Ovary (tissue), 10 donors: ENCODE measurements at regions of chr6 and their contacts with region 1.

Region 1: DNA sequence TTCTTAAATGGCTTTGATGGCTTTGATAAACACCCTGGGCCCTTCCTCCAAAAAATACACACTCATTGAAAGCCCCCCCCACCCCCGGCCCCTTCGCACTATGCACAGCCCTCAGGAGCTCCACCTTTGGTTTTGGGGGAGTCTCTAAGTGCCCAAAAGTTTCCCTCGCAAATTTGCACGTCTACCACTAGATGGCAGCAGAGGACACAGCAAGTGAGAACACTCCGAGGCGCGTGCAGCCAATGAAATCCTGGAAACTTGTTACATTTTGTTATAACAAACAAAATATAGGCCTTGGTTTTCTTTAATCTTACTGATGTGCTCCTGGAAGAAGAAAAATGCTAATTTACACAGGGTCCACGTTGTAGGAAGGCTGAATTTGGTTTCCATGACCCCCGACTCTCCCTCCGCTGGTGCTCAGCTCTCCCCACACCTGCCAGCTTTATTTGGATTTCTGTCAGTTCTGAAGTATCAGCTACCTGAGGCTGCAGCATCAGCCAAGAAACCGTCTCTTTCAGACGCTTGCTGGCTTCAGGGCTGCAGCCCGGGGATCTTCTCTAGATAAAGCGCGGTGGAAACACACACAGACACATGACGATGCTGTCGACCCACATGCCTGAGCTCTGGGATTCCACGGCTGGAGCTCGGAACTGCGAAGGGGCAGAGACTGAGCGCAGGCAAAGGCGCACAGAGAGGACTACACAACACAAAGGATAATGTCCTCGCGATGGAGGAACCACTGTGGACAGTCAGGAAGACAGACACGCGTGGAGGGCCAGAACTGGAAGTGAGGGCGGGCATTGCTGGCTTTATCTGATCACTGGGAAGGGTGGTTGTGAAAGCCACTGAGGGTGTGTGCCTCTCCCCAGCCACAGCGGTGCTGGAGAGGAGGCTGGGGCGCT is 148.4 kb upstream of the RPS6KA2 start:
- DNase-seq: peak; percentile 40 to 62 (median 55)
- H3K4me3 ChIP-seq: no peak overlapping the region
- H3K27ac ChIP-seq: no peak overlapping the region
- H3K4me1 ChIP-seq: no peaks in the 10 kb centered on the region
- H3K27me3 ChIP-seq: no peaks in the 10 kb centered on the region
- CTCF ChIP-seq: peak in 2 of 3 donors; percentile 58 to 83
- EP300 ChIP-seq: no peak
- POLR2A ChIP-seq: no peak

Region 2: DNA sequence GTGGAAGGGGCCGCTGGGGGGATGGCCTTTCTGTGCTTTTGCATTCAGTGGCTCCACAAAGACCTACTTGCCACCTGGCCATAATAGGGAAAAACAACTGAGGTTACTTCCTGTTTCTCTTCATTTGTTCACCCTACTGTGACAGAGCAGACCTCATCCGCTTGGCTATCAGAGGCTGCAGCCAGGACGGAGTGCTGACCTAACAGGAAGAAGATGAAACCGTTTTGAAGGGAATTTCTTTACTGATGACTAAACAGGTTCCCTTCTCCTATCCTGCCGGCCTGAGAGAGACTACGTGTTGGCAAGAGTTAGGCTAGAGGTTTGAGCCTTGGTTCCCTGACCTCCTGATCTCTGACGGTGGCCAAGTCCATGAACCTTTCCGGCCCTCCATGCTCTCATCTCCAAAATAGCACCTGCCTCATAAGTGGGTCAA is 488.6 kb before region 1 on chr6:
- intact Hi-C with region 1: no loop called
- DNase-seq: no peak
- H3K4me3 ChIP-seq: no peak overlapping the region
- H3K27ac ChIP-seq: no peak overlapping the region
- H3K4me1 ChIP-seq: no peaks in the 10 kb centered on the region
- H3K27me3 ChIP-seq: no peaks in the 10 kb centered on the region
- CTCF ChIP-seq: no peak
- EP300 ChIP-seq: no peak
- POLR2A ChIP-seq: no peak

Region 3: GRCh38 chr6:166728957-166729441 is 46.4 kb before region 1 on chr6:
- intact Hi-C with region 1: no loop called
- DNase-seq: no peak
- H3K4me3 ChIP-seq: no peak overlapping the region
- H3K27ac ChIP-seq: no peak overlapping the region
- H3K4me1 ChIP-seq: no peaks in the 10 kb centered on the region
- H3K27me3 ChIP-seq: no peaks in the 10 kb centered on the region
- CTCF ChIP-seq: no peak
- EP300 ChIP-seq: no peak
- POLR2A ChIP-seq: no peak

Region 4: GRCh38 chr6:166989427-166990032 is 214.1 kb after region 1 on chr6:
- intact Hi-C with region 1: loop called in 1 of 4 experiments (anchors 10 kb)
- DNase-seq: no peak
- H3K4me3 ChIP-seq: no peak overlapping the region
- H3K27ac ChIP-seq: no peak overlapping the region
- H3K4me1 ChIP-seq: no peaks in the 10 kb centered on the region
- H3K27me3 ChIP-seq: no peaks in the 10 kb centered on the region
- CTCF ChIP-seq: no peak
- EP300 ChIP-seq: no peak
- POLR2A ChIP-seq: no peak

Region 5: DNA sequence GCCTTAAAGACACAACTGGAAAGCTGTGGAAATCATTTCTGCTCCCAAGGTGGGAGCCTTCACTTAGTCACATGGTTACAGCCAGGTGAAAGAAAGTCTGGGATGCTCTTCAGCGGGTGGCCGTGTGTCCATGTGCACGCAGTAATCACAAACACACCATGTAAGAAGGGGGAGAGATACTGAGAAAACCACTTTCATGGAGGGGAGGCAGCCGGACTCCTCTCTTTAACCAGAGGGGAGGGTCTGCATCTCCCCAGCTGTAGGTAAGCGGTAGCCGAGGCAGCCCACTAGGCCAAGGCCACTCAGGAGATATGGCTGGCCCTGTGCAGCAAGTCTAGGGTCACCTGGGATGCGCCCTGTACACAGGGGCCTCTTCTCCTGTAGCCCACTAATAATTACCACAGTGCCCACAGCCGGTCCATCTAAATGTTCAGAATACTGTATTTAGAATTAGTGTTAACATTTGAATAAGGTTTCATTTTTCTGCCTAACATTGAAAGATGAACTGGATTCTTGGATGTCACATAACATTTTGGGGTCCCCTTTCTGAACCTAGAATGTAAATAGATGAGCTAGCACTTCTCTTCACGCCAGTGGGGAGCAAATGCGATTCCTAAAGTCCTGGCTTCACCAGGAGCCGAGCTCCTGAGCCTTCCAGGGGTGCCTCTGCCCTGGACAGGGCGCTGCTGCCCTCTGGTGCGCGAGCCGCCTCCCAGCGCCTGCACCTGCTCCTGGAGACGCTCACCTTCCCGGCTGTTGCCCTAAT is 366.4 kb after region 1 on chr6:
- intact Hi-C with region 1: loop called in 3 of 4 experiments (anchors 5 to 10 kb)
- DNase-seq: peak; percentile 30 to 74 (median 54)
- H3K4me3 ChIP-seq: no peak overlapping the region
- H3K27ac ChIP-seq: no peak overlapping the region
- H3K4me1 ChIP-seq: no peaks in the 10 kb centered on the region
- H3K27me3 ChIP-seq: no peaks in the 10 kb centered on the region
- CTCF ChIP-seq: peak; percentile 22 to 71 (median 65)
- EP300 ChIP-seq: no peak
- POLR2A ChIP-seq: no peak